Left ventricle myocardium superior (tissue), 1 donor: ENCODE measurements at regions of chr18 and their contacts with region 1.

Region 1: DNA sequence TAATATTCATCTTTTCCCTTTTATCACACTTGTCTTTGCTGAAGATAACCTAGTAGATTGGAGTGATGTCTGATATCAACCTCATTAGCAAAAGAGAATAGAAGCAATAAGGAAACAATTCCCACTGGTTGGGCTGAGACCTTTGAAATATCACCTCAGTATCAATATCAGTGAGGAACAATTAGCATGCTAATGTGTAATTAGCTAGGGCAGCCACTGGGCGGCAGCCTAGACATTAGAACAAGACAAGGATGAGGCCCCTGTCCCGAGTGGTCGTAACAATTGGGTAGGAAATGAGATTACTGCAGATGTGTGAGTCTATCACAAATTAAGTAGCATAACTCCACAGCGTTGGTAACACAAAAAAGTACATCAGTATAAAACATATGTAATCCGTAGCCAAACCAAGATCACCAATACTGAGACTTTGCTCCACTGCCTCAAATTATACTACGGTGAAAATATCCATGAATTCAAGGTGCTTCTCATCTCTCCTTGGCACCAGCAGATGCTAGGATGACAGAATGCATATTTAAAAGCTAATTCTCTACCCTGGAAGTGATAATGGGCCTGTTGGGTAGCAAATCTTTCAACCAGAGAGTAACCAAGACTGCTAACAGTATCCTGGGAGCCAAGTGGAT is 99.1 kb downstream of the ALPK2 start:
- DNase-seq: peak; percentile 67
- ATAC-seq: peak; percentile 59

Region 2: DNA sequence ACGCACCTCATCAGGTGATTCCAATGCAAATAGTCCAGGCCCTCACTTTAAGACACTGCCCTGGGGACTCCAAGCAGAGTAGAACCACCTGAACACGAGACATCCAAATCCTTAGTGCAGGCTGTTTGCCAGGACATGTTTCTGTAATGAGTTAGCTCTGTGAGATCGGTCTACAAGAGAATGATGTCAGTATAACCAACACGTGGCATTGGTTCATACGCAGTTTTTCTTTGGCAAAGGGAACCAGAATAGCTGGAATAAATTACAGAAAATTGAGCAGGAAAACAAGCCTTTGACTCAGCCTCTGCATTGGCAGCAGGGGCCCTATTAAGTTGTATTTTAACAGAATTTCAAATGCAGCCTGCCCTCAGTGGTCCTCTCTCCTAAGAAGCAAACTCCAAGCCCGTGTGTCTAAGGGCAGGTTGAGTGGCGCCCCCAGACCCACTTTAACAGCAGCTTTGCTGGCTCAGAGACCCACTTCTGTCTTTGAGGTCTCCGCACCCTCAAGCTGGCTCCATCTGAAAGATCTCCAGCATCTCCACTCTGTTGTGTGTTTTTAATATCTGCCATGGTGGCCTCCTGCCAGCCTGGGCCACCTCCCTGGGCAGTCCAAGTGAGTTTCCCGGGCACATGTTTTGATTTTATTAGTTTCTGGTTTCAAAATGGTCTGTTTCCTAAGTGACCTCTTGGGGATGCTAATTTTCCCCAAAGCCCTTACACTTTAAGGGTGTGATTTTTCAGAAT is 37.8 kb after region 1 on chr18:
- intact Hi-C with region 1: no loop called
- DNase-seq: no peak
- ATAC-seq: peak; percentile 78

Region 3: GRCh38 chr18:58768293-58768974 is 238.6 kb after region 1 on chr18:
- intact Hi-C with region 1: loop called (anchors 2 kb)
- DNase-seq: peak; percentile 84
- ATAC-seq: peak; percentile 93